Mammary epithelial cell (primary cell): ENCODE measurements at regions of chr2 and their contacts with region 1.

Region 1: DNA sequence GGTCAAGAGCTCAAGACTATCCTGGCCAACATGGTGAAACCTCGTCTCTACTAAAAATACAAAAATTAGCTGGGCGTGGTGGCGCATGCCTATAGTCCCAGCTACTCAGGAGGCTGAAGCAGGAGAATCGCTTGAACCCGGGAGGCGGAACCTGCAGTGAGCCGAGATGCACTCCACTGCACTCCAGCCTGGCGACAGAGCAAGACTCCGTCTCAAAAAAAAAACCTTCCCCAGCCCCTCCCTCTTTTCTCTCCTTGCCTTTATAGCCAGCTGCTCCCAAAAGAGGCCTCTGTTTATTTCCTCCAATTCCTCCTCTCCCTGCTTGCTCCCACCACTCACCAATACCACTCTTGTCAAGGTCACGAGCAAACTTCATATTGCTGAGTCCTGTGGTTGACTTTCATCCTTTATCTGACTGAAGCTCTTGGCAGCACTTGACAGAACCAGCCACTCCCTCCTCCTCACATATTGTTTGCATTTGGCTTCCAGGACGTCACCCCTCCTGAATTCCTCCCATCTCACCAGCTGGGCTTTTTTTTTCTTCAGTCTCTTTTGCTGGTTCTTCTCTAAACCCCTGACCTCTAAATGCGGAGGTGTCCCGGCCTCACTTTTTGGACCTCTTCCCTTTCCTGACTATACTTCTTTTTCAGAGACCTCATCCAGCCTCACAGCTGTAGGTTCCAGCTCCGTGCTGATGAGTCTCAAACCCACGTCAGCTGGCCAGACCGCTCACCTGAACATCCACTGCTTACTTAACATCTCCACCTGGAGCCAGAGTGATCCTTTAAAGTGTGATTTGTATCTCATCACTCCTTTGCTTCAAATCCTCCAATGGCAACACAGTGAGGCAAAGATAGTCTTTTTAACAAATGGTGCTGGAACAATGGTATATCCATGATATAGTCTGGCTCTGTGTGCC is 84.6 kb upstream of the CAB39 start:
- DNase-seq: no peak
- H3K4me3 ChIP-seq: no peak overlapping the region
- H3K27ac ChIP-seq: no peak overlapping the region
- H3K4me1 ChIP-seq: no peaks in the 10 kb centered on the region
- H3K27me3 ChIP-seq: no peaks in the 10 kb centered on the region
- CTCF ChIP-seq: no peak

Region 2: DNA sequence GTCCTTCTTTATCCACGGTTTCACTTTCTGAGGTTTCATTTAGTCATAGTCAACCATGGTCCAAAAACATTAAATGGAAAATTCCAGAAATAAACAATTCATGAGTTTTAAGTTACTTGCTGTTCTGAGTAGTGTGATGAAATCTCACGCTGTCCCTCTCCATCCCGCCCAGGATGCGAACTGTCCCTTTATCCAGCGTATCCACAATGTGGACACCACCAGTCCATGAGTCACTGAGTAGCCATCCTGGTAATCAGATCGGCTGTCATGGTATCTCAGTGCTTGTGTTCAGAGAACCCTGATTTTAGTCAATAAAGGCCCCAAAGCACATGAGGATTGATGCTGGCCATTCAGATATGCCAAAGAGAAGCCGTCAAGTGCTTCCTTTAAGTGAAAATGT is 297.3 kb before region 1 on chr2:
- CTCF ChIA-PET with region 1: no interaction called
- dilution Hi-C with region 1: no loop called
- in situ Hi-C with region 1: no loop called
- intact Hi-C with region 1: no loop called
- DNase-seq: no peak
- H3K4me3 ChIP-seq: no peak overlapping the region
- H3K27ac ChIP-seq: no peak overlapping the region
- H3K4me1 ChIP-seq: peaks cover 11% of the 10 kb centered on the region
- H3K27me3 ChIP-seq: no peaks in the 10 kb centered on the region
- CTCF ChIP-seq: no peak

Region 3: GRCh38 chr2:230660294-230661060 is 32.4 kb after region 1 on chr2:
- CTCF ChIA-PET with region 1: no interaction called
- dilution Hi-C with region 1: no loop called
- in situ Hi-C with region 1: no loop called
- intact Hi-C with region 1: loop called (anchors 5 kb)
- DNase-seq: no peak
- H3K4me3 ChIP-seq: no peak overlapping the region
- H3K27ac ChIP-seq: no peak overlapping the region
- H3K4me1 ChIP-seq: no peaks in the 10 kb centered on the region
- H3K27me3 ChIP-seq: no peaks in the 10 kb centered on the region
- CTCF ChIP-seq: no peak